Naive thymus-derived CD4-positive, alpha-beta T cell (primary cell): ENCODE measurements at regions of chr10 and their contacts with region 1.

Region 1: GRCh38 chr10:6678211-6678803 is 98.2 kb upstream of the PRKCQ start:
- DNase-seq: peak in 8 of 9 donors; percentile 24 to 55 (median 48)
- ATAC-seq: peak; percentile 56
- H3K4me3 ChIP-seq: no peak overlapping the region
- H3K4me3 Mint-ChIP-seq: no peak overlapping the region
- H3K27ac ChIP-seq: no peak overlapping the region
- H3K27ac Mint-ChIP-seq: no peak overlapping the region
- H3K4me1 ChIP-seq: no peaks in the 10 kb centered on the region
- H3K4me1 Mint-ChIP-seq: peaks cover 0 to 12% (median 0%) of the 10 kb centered on the region in 7 donors
- H3K27me3 ChIP-seq: no peaks in the 10 kb centered on the region
- H3K27me3 Mint-ChIP-seq: peaks cover 0 to 66% (median 0%) of the 10 kb centered on the region in 5 donors

Region 2: DNA sequence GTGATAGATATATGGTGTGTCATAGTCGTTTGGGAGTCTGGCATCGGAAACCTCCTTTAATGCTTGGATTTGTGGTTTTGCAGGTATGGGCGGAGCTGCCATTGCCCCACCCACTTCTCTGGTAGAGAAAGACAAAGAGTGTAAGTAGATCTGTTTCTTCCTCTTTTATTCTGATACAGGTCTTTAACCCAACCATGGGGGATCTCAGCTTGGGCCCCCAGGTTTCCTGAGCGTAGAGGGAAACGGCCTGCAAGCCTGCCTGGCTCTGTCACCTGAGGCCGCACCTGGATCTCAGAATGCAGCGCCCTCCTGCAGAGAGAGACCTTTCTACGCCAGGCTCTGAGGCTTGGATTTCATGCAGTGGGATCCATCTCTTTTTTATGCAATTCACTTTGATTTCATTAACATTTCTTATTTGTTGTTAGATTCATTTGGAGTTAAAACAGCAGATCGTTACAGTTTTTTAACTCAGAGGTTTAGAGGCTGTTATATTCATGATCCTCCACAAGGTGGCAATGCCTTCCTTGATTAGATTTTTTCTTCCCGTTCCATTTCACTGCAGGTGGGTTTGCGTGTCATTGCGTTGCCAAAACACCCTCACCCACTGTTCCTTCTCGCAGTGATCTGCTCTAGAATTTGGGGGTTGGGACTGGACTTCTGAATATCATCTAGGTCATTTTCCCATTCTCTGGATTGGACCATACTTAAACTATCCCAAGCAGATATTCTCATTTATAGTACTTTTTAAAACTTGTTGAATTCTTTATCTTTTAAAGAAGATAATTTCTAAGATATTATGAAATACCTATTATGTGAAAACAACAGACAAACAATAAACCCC is 569.5 kb before region 1 on chr10:
- CTCF ChIA-PET with region 1: interaction called, 3 read pairs
- POLR2A ChIA-PET with region 1: no interaction called
- intact Hi-C with region 1: loop called (anchors 1 to 5 kb)
- DNase-seq: peak in 7 of 9 donors; percentile 38 to 66 (median 62)
- ATAC-seq: peak; percentile 85
- H3K4me3 ChIP-seq: no peak overlapping the region
- H3K4me3 Mint-ChIP-seq: peak overlapping the region in 3 of 10 donors; percentile 2 to 37 (median 29)
- H3K27ac ChIP-seq: no peak overlapping the region
- H3K27ac Mint-ChIP-seq: peak overlapping the region; percentile 37 to 91 (median 80)
- H3K4me1 ChIP-seq: peaks cover 10 to 11% of the 10 kb centered on the region in 2 donors
- H3K4me1 Mint-ChIP-seq: peaks cover 11 to 38% (median 23%) of the 10 kb centered on the region in 7 donors
- H3K27me3 ChIP-seq: no peaks in the 10 kb centered on the region
- H3K27me3 Mint-ChIP-seq: no peaks in the 10 kb centered on the region

Region 3: DNA sequence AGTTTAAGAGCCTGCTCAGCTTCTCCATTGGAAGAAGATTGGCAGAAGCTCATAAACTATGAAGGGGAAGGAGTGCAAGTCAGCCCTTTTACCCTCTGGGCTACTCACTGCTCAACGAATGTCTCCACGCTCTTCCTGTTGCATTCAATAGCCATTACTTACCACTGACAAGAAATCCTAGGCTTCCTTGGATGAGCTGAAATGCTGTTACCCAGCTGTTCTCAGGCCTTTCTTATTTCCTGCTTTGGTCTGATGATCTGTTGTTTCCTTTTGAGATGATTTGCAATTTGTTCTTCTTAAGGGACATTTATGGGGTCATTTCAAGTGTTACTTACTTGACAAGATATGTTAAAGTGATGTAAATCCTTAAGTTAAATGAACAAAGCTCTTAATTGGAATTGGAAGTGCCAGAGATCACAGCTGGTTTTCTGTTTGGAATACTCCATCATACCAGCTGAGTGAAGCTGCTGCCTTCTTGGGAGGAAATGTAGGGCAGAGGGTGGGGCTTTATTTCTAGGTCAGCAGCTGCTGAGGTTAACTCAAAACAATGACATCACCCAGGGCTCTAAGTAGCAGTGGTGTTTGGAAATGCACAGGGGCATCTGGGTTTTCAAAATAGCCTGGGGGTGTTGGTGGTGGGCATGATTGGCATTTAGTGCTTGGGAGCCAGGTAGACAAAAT is 268.2 kb before region 1 on chr10:
- CTCF ChIA-PET with region 1: interaction called, 32 read pairs
- POLR2A ChIA-PET with region 1: no interaction called
- intact Hi-C with region 1: no loop called
- DNase-seq: peak in 8 of 9 donors; percentile 20 to 64 (median 56)
- ATAC-seq: peak; percentile 95
- H3K4me3 ChIP-seq: peak overlapping the region; percentile 28
- H3K4me3 Mint-ChIP-seq: peak overlapping the region in 9 of 10 donors; percentile 43 to 75 (median 66)
- H3K27ac ChIP-seq: peak overlapping the region; percentile 55
- H3K27ac Mint-ChIP-seq: peak overlapping the region; percentile 83 to 97 (median 89)
- H3K4me1 ChIP-seq: peaks cover 11 to 25% of the 10 kb centered on the region in 2 donors
- H3K4me1 Mint-ChIP-seq: peaks cover 19 to 40% (median 34%) of the 10 kb centered on the region in 7 donors
- H3K27me3 ChIP-seq: no peaks in the 10 kb centered on the region
- H3K27me3 Mint-ChIP-seq: no peaks in the 10 kb centered on the region

Region 4: DNA sequence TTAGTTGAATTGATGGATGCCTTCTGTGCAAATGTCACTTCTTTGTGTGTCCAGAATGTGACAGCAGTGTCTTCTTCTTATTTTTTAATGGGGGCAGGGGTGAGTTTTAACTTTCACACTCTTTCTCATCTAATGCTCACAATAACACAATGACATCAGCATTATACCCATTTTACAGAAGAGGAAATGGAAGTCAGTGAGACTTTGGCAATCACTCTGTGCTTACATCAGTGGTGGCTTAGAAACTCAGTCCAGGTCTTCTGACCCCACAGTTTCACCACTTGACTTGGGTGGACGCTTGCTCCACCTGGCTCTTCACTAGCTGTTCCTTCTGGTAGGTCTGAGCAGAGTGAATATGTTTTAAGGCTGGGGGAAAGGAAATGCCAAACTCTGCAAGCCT is 222.2 kb before region 1 on chr10:
- CTCF ChIA-PET with region 1: no interaction called
- POLR2A ChIA-PET with region 1: no interaction called
- intact Hi-C with region 1: no loop called
- DNase-seq: no peak
- ATAC-seq: no peak
- H3K4me3 ChIP-seq: no peak overlapping the region
- H3K4me3 Mint-ChIP-seq: no peak overlapping the region
- H3K27ac ChIP-seq: no peak overlapping the region
- H3K27ac Mint-ChIP-seq: peak overlapping the region in 5 of 9 donors; percentile 6 to 63 (median 38)
- H3K4me1 ChIP-seq: no peaks in the 10 kb centered on the region
- H3K4me1 Mint-ChIP-seq: peaks cover 14 to 38% (median 25%) of the 10 kb centered on the region in 7 donors
- H3K27me3 ChIP-seq: no peaks in the 10 kb centered on the region
- H3K27me3 Mint-ChIP-seq: no peaks in the 10 kb centered on the region